AG04450 (cell line): ENCODE measurements at regions of chr14 and their contacts with region 1.

Region 1: DNA sequence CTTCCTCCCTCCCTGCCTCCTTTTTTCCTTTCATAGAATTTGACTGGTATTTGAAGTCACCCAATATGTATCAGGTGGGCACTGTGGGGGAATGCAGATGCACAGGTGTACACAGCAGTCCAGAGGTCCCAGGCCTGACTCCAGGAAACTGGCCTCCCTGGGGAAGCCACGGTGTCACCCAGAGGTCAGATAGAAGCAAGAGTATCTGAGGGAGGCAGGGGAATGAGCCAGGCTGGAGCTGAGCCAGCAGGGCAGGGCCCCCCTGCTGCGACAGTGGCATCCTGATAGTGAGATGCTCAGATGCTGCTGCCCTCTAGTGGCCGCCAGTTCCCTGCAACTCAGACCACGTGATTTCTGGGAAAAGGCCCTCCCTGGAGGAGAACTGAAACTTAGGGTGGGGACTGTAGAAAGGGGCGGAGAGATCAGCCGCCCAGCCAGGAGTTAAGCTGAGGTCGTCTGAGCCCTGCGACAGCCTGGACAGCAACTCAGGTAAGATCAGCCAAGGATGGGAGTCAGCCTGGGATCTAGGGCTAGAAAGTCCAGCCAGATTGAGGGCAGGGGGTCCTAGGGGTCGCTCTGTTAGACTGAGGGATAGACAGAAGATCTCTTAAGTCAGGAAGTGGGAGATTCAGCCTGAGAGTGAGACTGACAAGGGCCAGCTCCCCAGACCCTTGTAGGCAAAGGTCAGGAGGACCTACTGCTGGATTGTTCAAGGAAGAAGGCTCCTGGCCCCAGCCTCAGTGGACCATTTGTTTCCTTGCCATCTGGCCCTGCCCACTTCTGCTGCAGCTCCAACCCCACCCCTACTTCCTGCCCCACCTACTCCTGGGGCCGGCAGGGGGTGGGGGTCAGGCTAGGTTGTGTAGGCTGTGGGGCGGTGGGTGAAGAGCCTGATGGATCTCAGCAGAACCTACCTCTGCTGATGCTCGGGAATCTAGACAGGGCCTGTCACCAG is at the start of gene IRF9:
- DNase-seq: peak; percentile 85
- H3K4me3 ChIP-seq: peak within 1 kb of the TSS; percentile 94
- H3K27ac ChIP-seq: peak within 1 kb of the TSS; percentile 61
- H3K27me3 ChIP-seq: no peaks in the 10 kb centered on the region
- CTCF ChIP-seq: peak; percentile 89
- polyA plus RNA-seq, gene IRF9: 48.4 and 55.1 TPM in 2 replicates

Region 2: GRCh38 chr14:24058260-24058950 is 102.7 kb before region 1 on chr14:
- CTCF ChIA-PET with region 1: interaction called, 22 read pairs
- POLR2A ChIA-PET with region 1: no interaction called
- DNase-seq: peak; percentile 59
- H3K4me3 ChIP-seq: no peak overlapping the region
- H3K27ac ChIP-seq: no peak overlapping the region
- H3K27me3 ChIP-seq: peaks cover 36% of the 10 kb centered on the region
- CTCF ChIP-seq: peak; percentile 93

Region 3: DNA sequence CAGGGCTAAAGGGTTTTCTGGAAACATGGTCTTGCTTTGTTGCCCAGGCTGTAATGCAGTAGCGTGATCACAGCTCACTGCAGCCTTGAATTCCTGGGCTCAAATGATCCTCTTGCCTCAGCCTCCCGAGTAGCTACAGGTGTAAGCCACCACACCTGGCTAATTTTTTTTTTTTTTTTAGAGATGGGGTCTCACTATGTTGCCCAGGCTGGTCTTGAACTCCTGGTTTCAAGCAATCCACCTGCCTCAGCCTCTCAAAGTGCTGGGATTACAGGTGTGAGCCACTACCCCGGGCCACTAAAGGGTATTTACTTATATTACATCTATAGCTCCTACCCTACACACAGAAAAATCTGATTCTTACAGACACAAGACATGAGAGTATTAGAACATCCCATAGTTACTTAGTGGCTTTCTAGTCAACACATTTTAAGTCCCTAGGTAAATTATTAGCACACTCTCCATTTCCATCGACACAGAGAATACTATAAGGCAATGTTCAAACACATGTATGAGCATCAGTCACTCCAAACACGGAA is 52.7 kb before region 1 on chr14:
- CTCF ChIA-PET with region 1: interaction called, 16 read pairs
- POLR2A ChIA-PET with region 1: no interaction called
- DNase-seq: no peak
- H3K4me3 ChIP-seq: no peak overlapping the region
- H3K27ac ChIP-seq: no peak overlapping the region
- H3K27me3 ChIP-seq: no peaks in the 10 kb centered on the region
- CTCF ChIP-seq: no peak

Region 4: DNA sequence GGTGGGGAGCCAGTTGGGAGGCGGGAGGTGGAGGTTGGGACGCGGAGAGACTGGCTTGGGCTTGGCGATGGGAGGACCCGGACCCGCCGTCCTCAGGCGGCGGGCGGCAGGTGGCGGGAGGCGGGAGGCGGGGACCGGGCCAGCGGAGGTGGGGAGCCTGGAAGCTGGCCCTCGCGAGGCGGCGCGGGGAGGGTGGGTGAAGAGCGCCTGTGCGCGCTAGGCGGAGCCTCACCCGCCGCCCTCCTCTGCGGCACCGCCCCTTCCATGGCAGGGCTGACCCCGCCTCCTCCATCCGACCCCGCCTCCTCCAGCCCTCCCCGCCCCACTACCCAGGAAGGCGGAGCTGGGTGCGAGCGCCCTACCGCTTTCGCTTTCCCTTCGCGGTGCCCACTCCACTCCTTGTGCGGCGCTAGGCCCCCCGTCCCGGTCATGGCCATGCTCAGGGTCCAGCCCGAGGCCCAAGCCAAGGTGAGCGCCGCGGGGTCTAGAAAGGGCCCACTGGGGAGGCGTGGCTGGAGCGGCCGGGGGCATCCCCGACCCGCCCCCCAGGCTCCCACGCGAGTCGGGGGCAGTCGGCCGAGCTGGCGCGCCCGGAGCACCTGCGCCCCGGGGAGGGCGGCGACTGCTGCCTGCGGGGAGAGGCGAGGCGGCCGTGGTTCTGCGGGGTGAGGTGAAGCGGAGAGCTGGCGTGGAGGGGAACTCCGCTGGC is 25.1 kb before region 1 on chr14 and contains the start of gene PSME1:
- CTCF ChIA-PET with region 1: interaction called, 11 read pairs
- POLR2A ChIA-PET with region 1: interaction called, 7 read pairs
- DNase-seq: peak; percentile 59
- H3K4me3 ChIP-seq: peak within 1 kb of the TSS; percentile 80
- H3K27ac ChIP-seq: no peak within 1 kb of the TSS
- H3K27me3 ChIP-seq: no peaks in the 10 kb centered on the region
- CTCF ChIP-seq: no peak
- polyA plus RNA-seq, gene PSME1: 80.0 and 94.9 TPM in 2 replicates

Region 5: DNA sequence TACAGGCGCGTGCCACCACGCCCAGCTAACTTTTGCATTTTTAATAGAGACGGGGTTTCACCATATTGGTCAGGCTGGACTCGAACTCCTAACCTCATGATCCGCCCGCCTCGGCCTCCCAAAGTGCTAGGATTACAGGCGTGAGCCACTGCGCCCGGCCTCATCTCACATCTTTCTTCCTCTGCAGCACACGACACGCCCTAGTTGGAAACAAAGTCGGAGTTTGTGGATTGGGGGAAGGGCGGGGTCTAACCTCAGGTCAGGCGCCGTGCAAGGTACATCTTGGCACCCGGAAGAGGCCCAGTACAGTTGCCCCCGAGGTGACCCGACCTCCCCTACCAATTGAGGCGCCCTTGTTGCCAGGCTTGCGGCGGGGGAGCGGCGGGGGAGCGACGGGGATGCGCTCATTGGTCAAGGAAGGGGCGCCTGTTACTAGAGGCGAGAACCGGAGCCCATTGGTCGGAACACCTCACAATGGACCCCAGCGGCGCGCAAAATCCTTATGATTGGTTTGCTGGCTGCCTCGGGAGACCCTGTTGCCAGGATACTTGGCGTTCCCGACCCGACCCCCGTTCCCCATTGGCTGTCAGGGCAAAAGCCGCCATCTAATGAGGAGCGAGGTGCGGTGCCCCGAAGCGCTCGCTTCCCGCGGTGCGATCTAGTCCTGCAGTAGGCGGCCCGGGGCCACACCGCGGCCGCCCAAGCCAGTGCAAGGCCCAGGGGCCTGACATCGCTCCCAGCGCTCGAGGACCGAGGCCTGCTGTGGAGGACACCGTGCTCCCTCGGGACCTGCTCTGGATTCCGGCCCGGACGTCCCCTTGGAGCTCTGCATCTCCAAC is 10.5 kb after region 1 on chr14 and contains the start of gene REC8:
- CTCF ChIA-PET with region 1: interaction called, 19 read pairs
- POLR2A ChIA-PET with region 1: interaction called, 10 read pairs
- DNase-seq: no peak
- H3K4me3 ChIP-seq: peak within 1 kb of the TSS; percentile 37
- H3K27ac ChIP-seq: no peak within 1 kb of the TSS
- H3K27me3 ChIP-seq: no peaks in the 10 kb centered on the region
- CTCF ChIP-seq: no peak
- polyA plus RNA-seq, gene REC8: 1.5 and 2.5 TPM in 2 replicates

Region 6: GRCh38 chr14:24299255-24300195 is 138.4 kb after region 1 on chr14 and contains the starts of genes DHRS1 and NOP9:
- CTCF ChIA-PET with region 1: interaction called, 19 read pairs
- POLR2A ChIA-PET with region 1: no interaction called
- DNase-seq: peak; percentile 54
- H3K4me3 ChIP-seq: peak within 1 kb of the TSS; percentile 96
- H3K27ac ChIP-seq: peak within 1 kb of the TSS; percentile 57
- H3K27me3 ChIP-seq: no peaks in the 10 kb centered on the region
- CTCF ChIP-seq: no peak
- polyA plus RNA-seq, gene DHRS1: 33.8 and 36.6 TPM in 2 replicates
- polyA plus RNA-seq, gene NOP9: 12.0 and 13.7 TPM in 2 replicates